PC-9 (cell line): ENCODE measurements at regions of chr21 and their contacts with region 1.

Region 1: GRCh38 chr21:36156339-36156814 is 247 bp upstream of the DOP1B start:
- DNase-seq: peak; percentile 83 to 97
- H3K4me3 ChIP-seq: peak overlapping the region; percentile 69
- H3K27ac ChIP-seq: peak overlapping the region; percentile 63; the same call in 1 of the 2 replicates
- H3K4me1 ChIP-seq: peaks cover 15% of the 10 kb centered on the region
- H3K27me3 ChIP-seq: no peaks in the 10 kb centered on the region
- CTCF ChIP-seq: no peak

Region 2: DNA sequence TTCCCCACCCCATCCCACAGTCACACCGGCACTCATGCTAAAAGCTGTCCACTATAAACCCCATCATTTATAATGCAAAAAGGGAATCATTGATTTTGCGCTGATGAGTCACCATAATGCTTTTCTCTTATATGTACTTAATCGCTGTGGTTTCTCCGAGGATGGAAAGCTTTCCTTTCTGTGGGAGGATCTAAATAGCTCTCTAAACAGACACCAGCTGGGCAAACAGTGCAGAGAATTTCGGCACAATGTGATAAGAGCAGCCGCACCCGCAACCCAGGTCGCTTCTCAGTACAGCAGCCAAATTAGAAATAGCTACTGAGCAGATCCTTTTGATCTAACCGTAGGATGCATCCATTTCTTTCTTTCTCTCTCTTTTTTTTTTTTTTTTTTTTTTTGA is 181.6 kb before region 1 on chr21:
- CTCF ChIA-PET with region 1: no interaction called
- POLR2A ChIA-PET with region 1: no interaction called
- intact Hi-C with region 1: no loop called
- DNase-seq: peak in 1 of 2 experiments; percentile 42
- H3K4me3 ChIP-seq: no peak overlapping the region
- H3K27ac ChIP-seq: no peak overlapping the region
- H3K4me1 ChIP-seq: no peaks in the 10 kb centered on the region
- H3K27me3 ChIP-seq: peaks cover 12% of the 10 kb centered on the region; the same call in 1 of the 2 replicates
- CTCF ChIP-seq: no peak

Region 3: GRCh38 chr21:36060159-36060921 is 96.0 kb before region 1 on chr21 and contains the start of gene SETD4:
- CTCF ChIA-PET with region 1: no interaction called
- POLR2A ChIA-PET with region 1: no interaction called
- intact Hi-C with region 1: no loop called
- DNase-seq: peak; percentile 86 to 91
- H3K4me3 ChIP-seq: peak within 1 kb of the TSS; percentile 96
- H3K27ac ChIP-seq: peak within 1 kb of the TSS; percentile 81
- H3K4me1 ChIP-seq: peaks cover 16% of the 10 kb centered on the region
- H3K27me3 ChIP-seq: no peaks in the 10 kb centered on the region
- CTCF ChIP-seq: no peak
- total RNA-seq, gene SETD4: 24.2 and 27.3 TPM in 2 replicates

Region 4: DNA sequence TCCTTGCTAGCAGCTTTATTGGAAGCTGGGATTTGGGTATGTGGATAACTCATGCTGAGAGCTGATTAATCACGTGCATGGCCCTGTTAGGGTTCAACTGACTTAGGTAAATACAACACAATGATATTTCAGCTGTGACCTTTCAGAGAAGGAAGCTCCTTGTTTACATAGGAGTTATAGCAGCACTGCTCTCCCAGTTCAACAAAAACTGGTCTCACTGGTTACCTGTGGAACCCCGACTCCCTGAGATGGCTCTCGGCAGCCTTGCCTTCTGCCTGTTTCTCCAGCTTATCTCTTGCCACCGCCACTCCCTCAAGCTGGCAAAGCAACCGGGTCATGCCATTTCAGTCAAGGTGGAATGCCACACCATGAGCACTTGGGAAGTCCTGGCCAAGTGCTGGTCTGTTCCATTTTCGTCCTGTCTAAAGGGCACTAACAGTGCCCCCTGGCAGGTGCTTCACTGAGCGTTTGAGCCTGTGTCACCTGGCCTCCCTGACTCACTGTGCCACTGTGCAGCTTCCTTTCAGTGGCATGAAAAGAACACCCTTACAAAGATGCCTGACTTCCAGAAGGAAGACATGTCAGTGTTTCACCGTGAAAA is 31.8 kb after region 1 on chr21:
- CTCF ChIA-PET with region 1: no interaction called
- POLR2A ChIA-PET with region 1: interaction called, 5 read pairs
- intact Hi-C with region 1: loop called (anchors 1 kb)
- DNase-seq: peak; percentile 81 to 93
- H3K4me3 ChIP-seq: peak overlapping the region; percentile 37; the same call in 1 of the 2 replicates
- H3K27ac ChIP-seq: peak overlapping the region; percentile 60
- H3K4me1 ChIP-seq: peaks cover 50% of the 10 kb centered on the region
- H3K27me3 ChIP-seq: no peaks in the 10 kb centered on the region
- CTCF ChIP-seq: no peak

Region 5: GRCh38 chr21:36203617-36203917 is 47.2 kb after region 1 on chr21:
- CTCF ChIA-PET with region 1: interaction called, 4 read pairs
- POLR2A ChIA-PET with region 1: no interaction called
- intact Hi-C with region 1: loop called (anchors 1 kb)
- DNase-seq: peak; percentile 57 to 78
- H3K4me3 ChIP-seq: no peak overlapping the region
- H3K27ac ChIP-seq: peak overlapping the region; percentile 90
- H3K4me1 ChIP-seq: peaks cover 51% of the 10 kb centered on the region
- H3K27me3 ChIP-seq: no peaks in the 10 kb centered on the region
- CTCF ChIP-seq: no peak

Region 6: GRCh38 chr21:36330904-36331303 is 174.5 kb after region 1 on chr21:
- CTCF ChIA-PET with region 1: no interaction called
- POLR2A ChIA-PET with region 1: no interaction called
- intact Hi-C with region 1: loop called (anchors 1 kb)
- DNase-seq: peak; percentile 32 to 40
- H3K4me3 ChIP-seq: no peak overlapping the region
- H3K27ac ChIP-seq: no peak overlapping the region
- H3K4me1 ChIP-seq: no peaks in the 10 kb centered on the region
- H3K27me3 ChIP-seq: no peaks in the 10 kb centered on the region
- CTCF ChIP-seq: peak; percentile 72

Region 7: GRCh38 chr21:36542312-36543107 is 386.1 kb after region 1 on chr21:
- CTCF ChIA-PET with region 1: no interaction called
- POLR2A ChIA-PET with region 1: no interaction called
- intact Hi-C with region 1: no loop called
- DNase-seq: no peak
- H3K4me3 ChIP-seq: no peak overlapping the region
- H3K27ac ChIP-seq: no peak overlapping the region
- H3K4me1 ChIP-seq: no peaks in the 10 kb centered on the region
- H3K27me3 ChIP-seq: no peaks in the 10 kb centered on the region
- CTCF ChIP-seq: no peak